Activated CD4-positive, alpha-beta T cell treated with anti-CD3 and anti-CD28 coated beads, Interleukin-2, amount 10 ng/mL, durations not matched to agents 7 days and 5 days (primary cell): ENCODE measurements at regions of chr6 and their contacts with region 1.

Region 1: GRCh38 chr6:138001750-138002349 is 105.4 kb downstream of the PERP start:
- DNase-seq: peak; percentile 70
- H3K4me3 Mint-ChIP-seq: no peak overlapping the region
- H3K27ac Mint-ChIP-seq: no peak overlapping the region
- H3K4me1 Mint-ChIP-seq: peaks cover 12% of the 10 kb centered on the region
- H3K27me3 Mint-ChIP-seq: peaks cover 4% of the 10 kb centered on the region

Region 2: GRCh38 chr6:137982418-137983189 is 19.2 kb before region 1 on chr6:
- CTCF ChIA-PET with region 1: interaction called, 11 read pairs
- POLR2A ChIA-PET with region 1: no interaction called
- DNase-seq: no peak
- H3K4me3 Mint-ChIP-seq: no peak overlapping the region
- H3K27ac Mint-ChIP-seq: peak overlapping the region; percentile 3
- H3K4me1 Mint-ChIP-seq: peaks cover 13% of the 10 kb centered on the region
- H3K27me3 Mint-ChIP-seq: peaks cover 10% of the 10 kb centered on the region